Right ventricle myocardium superior (tissue), 1 donor: ENCODE measurements at regions of chr1 and their contacts with region 1.

Region 1: DNA sequence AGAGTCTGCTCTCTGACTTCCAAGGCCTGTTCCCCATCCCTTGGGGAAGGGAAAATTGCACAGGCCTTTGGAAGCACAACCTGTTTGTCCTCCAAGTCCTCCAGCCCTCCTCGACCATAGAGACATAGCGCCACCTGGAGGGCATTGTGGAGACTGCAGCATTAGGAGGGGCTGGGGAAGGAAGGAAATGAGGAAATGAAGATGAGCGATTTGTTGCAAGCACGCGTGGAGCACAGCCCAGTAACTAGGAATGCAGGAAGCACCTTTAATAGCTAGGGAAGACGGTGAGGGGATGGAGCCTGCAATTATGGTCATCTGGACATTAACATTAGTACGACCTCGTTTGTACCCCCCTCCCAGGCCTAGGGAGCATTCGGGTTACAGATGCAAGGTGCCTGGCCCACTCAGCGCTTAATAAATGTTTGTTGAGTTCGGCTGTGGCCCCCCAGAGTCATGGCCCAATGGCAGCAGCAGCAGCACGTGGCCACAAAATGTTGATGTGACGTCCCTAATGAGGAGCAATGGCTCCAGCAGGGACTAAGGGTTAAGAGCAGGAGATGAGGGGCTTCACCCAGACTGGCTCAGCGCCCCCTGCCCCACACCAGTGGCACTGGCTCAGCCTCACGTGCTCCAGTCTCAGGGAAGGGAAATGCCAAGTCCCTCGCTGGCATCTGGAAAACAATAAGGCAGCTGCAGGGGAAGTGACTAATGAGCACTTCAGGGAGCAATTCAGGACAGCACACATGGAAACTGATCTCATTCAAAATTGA is 8.0 kb upstream of the CAMK2N1 start:
- DNase-seq: peak; percentile 92
- ATAC-seq: peak; percentile 88

Region 2: GRCh38 chr1:19563324-19564097 is 930.5 kb before region 1 on chr1:
- intact Hi-C with region 1: no loop called
- DNase-seq: peak; percentile 71
- ATAC-seq: peak; percentile 86

Region 3: DNA sequence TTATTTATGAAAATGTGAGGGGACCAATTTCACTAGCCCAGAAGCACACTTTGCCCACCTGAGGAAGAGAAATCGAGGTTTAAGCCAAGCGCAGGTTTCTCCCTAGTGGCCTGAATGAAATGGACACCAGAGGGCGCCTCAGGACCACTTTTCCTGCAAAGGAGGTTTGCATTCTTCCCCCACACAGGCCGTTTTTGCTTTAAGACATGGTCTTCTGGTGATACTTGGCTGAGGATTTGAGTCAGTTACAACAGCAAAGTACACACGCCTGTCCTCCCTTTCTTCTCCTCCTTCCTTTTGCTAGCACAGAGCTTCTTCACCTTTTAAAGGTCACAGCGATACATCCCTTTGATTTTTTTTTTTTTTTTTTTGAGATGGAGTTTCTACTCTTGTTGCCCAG is 576.0 kb before region 1 on chr1:
- intact Hi-C with region 1: loop called (anchors 10 kb)
- DNase-seq: peak; percentile 80
- ATAC-seq: peak; percentile 87

Region 4: GRCh38 chr1:20093940-20094391 is 400.1 kb before region 1 on chr1:
- intact Hi-C with region 1: loop called (anchors 10 kb)
- DNase-seq: peak; percentile 88
- ATAC-seq: peak; percentile 74

Region 5: GRCh38 chr1:20212685-20213331 is 281.2 kb before region 1 on chr1:
- intact Hi-C with region 1: loop called (anchors 2 kb)
- DNase-seq: peak; percentile 81
- ATAC-seq: peak; percentile 85

Region 6: DNA sequence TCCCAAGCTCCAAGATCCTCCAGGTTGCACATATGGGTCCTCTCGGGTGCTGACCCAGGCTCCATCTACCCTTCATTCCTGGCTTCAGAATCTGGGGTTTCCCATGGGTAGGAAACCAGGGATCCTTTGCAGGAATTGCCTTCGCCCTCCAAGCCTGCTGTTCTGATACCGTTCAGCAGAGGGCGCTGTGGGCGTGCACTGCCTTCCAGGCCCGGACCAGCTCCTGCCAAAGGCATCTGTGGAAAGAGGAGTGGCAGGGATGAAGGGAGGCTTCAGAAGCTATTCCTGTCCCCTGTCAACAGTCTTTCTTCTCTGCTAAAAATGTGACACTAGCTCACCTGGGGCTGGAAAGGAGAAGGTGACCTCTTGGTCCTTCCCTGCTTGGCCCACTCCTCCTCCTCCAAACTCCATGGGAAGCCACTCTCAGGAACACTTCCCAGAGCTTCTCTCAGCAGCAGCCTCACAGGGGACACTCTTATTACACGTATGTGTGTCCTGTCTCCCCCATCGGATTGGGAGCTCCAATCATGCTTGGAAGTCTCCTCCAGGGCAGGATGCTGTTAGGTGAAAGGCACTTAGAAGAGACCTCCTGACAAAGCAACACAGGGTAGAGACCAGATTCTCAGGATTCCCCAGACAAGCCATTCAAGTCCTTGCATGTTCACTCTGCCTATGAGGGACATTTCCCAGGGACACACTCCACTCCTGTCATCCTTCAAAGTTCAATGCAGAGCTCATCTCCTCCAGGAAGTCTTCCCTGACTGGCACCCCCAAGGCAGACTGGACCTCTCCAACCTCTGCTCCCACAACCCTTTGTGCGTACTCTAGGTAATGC is 132.0 kb before region 1 on chr1:
- intact Hi-C with region 1: loop called (anchors 5 kb)
- DNase-seq: peak; percentile 73
- ATAC-seq: peak; percentile 19